Ascending aorta (tissue), 2 donors: ENCODE measurements at regions of chr5 and their contacts with region 1.

Region 1: DNA sequence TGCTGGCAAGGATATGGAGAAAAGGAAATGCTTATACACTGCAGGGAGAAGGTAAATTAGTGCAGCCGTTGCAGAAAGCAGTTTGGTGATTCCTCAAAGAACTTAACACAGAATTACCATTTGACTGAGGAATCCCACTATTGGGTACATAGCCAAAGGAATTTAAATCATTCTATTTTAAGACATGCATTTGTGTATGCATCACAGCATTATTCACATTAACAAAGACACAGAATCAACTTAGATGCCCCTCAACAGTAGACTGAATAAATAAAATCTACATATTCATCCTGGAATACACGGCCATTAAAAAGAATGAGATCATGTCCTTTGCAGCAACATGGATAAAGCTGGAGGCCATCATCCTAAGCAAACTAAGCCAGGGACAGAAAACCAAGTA is 510.1 kb upstream of the CDH9 start:
- DNase-seq: no peak
- H3K4me3 ChIP-seq: no peak overlapping the region
- H3K27ac ChIP-seq: no peak overlapping the region
- H3K4me1 ChIP-seq: no peaks in the 10 kb centered on the region
- H3K27me3 ChIP-seq: no peaks in the 10 kb centered on the region
- CTCF ChIP-seq: no peak

Region 2: GRCh38 chr5:27590503-27590902 is 42.0 kb after region 1 on chr5:
- intact Hi-C with region 1: no loop called
- DNase-seq: no peak
- H3K4me3 ChIP-seq: no peak overlapping the region
- H3K27ac ChIP-seq: no peak overlapping the region
- H3K4me1 ChIP-seq: no peaks in the 10 kb centered on the region
- H3K27me3 ChIP-seq: no peaks in the 10 kb centered on the region
- CTCF ChIP-seq: no peak

Region 3: DNA sequence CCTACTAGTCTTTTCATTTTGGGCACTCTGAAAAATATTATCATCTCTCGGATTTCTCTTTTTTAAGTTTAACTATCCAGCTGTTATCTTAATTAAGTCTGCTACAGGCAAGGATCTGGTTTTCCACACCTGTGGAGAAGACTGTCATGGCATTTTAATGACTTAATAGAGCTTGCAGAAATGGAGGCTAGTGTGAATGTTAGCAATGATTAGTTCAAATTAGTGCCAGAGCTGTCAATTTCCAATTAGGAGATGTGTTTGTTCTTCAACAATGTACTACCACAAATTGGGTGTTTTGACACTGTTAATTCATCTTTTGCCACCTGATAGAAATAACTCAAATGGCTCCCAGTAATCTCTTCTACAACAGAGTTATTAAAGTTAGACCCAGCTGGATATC is 1512.9 kb after region 1 on chr5:
- intact Hi-C with region 1: loop called (anchors 5 kb)
- DNase-seq: no peak
- H3K4me3 ChIP-seq: no peak overlapping the region
- H3K27ac ChIP-seq: no peak overlapping the region
- H3K4me1 ChIP-seq: no peaks in the 10 kb centered on the region
- H3K27me3 ChIP-seq: no peaks in the 10 kb centered on the region
- CTCF ChIP-seq: no peak